ENCODE measurements at regions of chr7 and their contacts with region 1.

Region 1: DNA sequence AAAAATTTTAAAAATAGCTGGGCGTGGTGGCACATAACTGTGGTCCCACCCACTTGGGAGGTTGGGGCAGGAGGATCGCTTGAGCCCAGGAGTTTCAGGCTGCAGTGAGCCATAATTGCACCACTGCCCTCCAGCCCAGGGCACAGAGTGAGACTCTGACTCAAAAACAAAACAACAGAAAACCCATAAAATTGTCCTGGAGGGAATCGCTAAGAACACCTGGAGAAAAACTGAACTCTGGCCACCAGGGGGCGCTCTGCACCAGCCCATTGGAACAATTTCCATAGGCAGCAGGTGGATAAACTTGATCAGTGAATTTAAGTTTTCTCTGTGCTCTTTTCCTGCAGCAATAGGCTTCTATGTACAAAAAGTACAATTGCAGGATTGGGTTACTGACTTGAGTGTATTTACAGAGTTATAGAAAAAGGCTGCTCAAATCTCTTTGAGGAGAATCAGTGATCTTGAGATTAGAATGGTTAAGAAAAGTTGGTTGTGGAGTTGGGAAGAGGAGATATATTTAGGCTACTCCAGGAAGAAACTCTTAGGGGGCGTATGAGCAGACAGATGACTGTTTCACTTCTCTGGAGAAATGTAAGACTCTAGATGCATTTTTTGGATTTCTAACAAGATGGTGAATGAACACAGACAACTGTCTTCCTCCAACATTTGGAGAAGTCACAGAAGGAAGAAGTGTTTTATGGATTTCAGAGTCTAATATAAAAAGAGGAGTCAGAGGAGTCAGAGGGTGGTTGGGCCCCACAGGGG is 274.9 kb upstream of the GALNT17 start:
- DNase-seq: peak; percentile 70 to 80 (median 75)
- ATAC-seq: peak; percentile 73
- H3K4me3 ChIP-seq: no peak overlapping the region
- H3K27ac ChIP-seq: no peak overlapping the region
- H3K4me1 ChIP-seq: no peaks in the 10 kb centered on the region
- H3K27me3 ChIP-seq: no peaks in the 10 kb centered on the region
- CTCF ChIP-seq: peak; percentile 82 to 95 (median 84)
- EP300 ChIP-seq: no peak
- POLR2A ChIP-seq: no peak
- RAD21 ChIP-seq: peak; percentile 81 to 89

Region 2: DNA sequence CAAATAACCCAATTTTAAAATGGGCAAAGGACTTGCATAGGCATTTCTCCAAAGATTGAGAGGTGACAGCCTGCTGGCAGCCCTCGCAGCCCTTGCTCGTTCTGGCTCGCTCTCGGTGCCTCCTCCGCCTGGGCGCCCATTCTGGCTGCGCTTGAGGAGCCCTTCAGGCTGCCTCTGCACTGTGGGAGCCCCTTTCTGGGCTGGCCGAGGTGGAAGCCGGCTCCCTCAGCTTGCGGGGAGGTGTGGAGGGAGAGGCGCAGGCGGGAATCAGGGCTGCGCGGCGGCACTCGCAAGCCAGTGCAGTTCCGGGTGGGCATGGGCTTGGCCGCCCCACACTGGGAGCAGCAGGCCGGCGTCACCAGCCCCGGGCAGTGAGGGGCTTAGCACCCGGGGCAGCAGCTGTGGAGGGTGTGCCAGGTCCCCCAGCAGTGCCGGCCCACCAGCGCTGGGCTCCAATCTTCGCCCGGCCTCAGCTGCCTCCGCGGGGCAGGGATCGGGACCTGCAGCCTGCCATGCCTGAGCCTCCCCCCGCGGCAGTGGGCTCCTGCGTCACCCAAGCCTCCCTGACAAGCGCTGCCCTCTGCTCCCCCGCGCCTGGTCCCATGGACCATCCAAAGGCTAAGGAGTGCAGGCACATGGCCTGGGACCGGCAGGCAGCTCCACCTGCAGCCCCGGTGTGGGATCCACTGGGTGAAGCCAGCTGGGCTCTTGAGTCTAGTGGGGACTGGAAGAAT is 220.9 kb after region 1 on chr7:
- CTCF ChIA-PET with region 1: no interaction called
- POLR2A ChIA-PET with region 1: no interaction called
- in situ Hi-C with region 1: no loop called
- intact Hi-C with region 1: loop called (anchors 10 kb)
- DNase-seq: no peak
- ATAC-seq: no peak
- H3K4me3 ChIP-seq: no peak overlapping the region
- H3K27ac ChIP-seq: no peak overlapping the region
- H3K4me1 ChIP-seq: no peaks in the 10 kb centered on the region
- H3K27me3 ChIP-seq: no peaks in the 10 kb centered on the region
- CTCF ChIP-seq: no peak
- EP300 ChIP-seq: no peak
- POLR2A ChIP-seq: no peak
- RAD21 ChIP-seq: no peak

Region 3: DNA sequence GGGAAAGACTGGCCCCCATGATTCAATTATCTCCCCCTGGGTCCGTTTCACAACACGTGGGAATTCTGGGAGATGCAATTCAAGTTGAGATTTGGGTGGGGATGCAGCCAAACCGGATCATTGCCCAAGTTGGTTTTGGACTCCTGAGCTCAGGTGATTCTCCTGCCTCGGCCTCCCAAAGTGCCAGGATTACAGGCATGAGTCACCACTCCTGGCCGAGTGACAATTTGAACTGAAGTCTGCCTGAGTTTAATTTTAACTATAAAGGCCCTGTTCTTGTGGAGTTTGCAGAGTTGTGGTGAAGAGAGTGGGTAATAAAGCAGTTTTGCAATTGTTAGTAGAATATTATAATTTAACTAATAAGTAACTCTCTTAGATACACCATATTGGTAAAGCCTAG is 353.2 kb after region 1 on chr7:
- CTCF ChIA-PET with region 1: no interaction called
- POLR2A ChIA-PET with region 1: no interaction called
- in situ Hi-C with region 1: no loop called
- intact Hi-C with region 1: loop called (anchors 10 kb)
- DNase-seq: no peak
- ATAC-seq: no peak
- H3K4me3 ChIP-seq: no peak overlapping the region
- H3K27ac ChIP-seq: no peak overlapping the region
- H3K4me1 ChIP-seq: no peaks in the 10 kb centered on the region
- H3K27me3 ChIP-seq: no peaks in the 10 kb centered on the region
- CTCF ChIP-seq: no peak
- EP300 ChIP-seq: no peak
- POLR2A ChIP-seq: no peak
- RAD21 ChIP-seq: no peak

Region 4: GRCh38 chr7:71733107-71733870 is 876.2 kb after region 1 on chr7:
- CTCF ChIA-PET with region 1: interaction called, 27 read pairs
- POLR2A ChIA-PET with region 1: no interaction called
- in situ Hi-C with region 1: loop called (anchors 5 kb)
- intact Hi-C with region 1: loop called (anchors 1 kb)
- DNase-seq: peak; percentile 83 to 88 (median 86)
- ATAC-seq: peak; percentile 94
- H3K4me3 ChIP-seq: no peak overlapping the region
- H3K27ac ChIP-seq: no peak overlapping the region
- H3K4me1 ChIP-seq: peaks cover 0 to 4% of the 10 kb centered on the region in 2 experiments; a peak in 1 of 5 replicates
- H3K27me3 ChIP-seq: no peaks in the 10 kb centered on the region; a peak in 1 of 5 replicates
- CTCF ChIP-seq: peak; percentile 85 to 92 (median 86)
- EP300 ChIP-seq: no peak
- POLR2A ChIP-seq: no peak
- RAD21 ChIP-seq: peak; percentile 82 to 90

Measured in K562 (cell line).